ENCODE measurements at regions of chr20 and their contacts with region 1.

Region 1: GRCh38 chr20:49186535-49187329 is 1.4 kb downstream of the STAU1 start:
- DNase-seq: peak; percentile 64 to 71
- H3K4me3 ChIP-seq: peak overlapping the region; percentile 77
- H3K4me3 Mint-ChIP-seq: peak overlapping the region; percentile 81
- H3K27ac Mint-ChIP-seq: peak overlapping the region; percentile 65
- H3K4me1 ChIP-seq: peaks cover 27% of the 10 kb centered on the region
- H3K4me1 Mint-ChIP-seq: peaks cover 36% of the 10 kb centered on the region
- H3K27me3 ChIP-seq: no peaks in the 10 kb centered on the region
- H3K27me3 Mint-ChIP-seq: no peaks in the 10 kb centered on the region
- CTCF ChIP-seq: peak in 1 of 2 experiments; percentile 25

Region 2: GRCh38 chr20:48275685-48276342 is 910.9 kb before region 1 on chr20:
- CTCF ChIA-PET with region 1: no interaction called
- POLR2A ChIA-PET with region 1: no interaction called
- intact Hi-C with region 1: loop called (anchors 10 kb)
- DNase-seq: peak in 1 of 2 experiments; percentile 34
- H3K4me3 ChIP-seq: no peak overlapping the region
- H3K4me3 Mint-ChIP-seq: no peak overlapping the region
- H3K27ac Mint-ChIP-seq: peak overlapping the region; percentile 20
- H3K4me1 ChIP-seq: peaks cover 33% of the 10 kb centered on the region
- H3K4me1 Mint-ChIP-seq: peaks cover 26% of the 10 kb centered on the region
- H3K27me3 ChIP-seq: no peaks in the 10 kb centered on the region
- H3K27me3 Mint-ChIP-seq: no peaks in the 10 kb centered on the region
- CTCF ChIP-seq: no peak

Region 3: DNA sequence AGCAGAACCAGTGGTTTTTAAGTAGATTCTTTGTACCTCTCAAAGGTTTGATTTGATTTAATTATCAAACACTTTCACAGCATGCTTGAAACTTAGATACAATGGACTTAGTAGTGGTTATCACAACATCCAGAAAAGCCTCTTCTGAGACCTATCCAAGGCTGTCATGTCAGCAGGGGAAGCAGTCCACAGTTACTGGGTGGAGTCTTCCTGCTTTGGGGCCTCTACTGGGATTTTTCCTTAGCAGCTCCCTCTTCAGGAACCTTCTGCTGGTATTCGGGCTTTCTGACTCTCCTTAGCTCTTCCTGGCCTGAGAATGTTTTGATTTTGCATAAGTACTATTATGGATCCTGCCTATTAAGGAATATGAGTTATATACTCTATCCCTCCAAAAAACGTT is 229.2 kb before region 1 on chr20:
- CTCF ChIA-PET with region 1: no interaction called
- POLR2A ChIA-PET with region 1: interaction called, 13 read pairs
- intact Hi-C with region 1: no loop called
- DNase-seq: no peak
- H3K4me3 ChIP-seq: no peak overlapping the region
- H3K4me3 Mint-ChIP-seq: no peak overlapping the region
- H3K27ac Mint-ChIP-seq: no peak overlapping the region
- H3K4me1 ChIP-seq: no peaks in the 10 kb centered on the region
- H3K4me1 Mint-ChIP-seq: no peaks in the 10 kb centered on the region
- H3K27me3 ChIP-seq: no peaks in the 10 kb centered on the region
- H3K27me3 Mint-ChIP-seq: no peaks in the 10 kb centered on the region
- CTCF ChIP-seq: no peak

Region 4: GRCh38 chr20:49132995-49133478 is 53.7 kb before region 1 on chr20:
- CTCF ChIA-PET with region 1: interaction called, 3 read pairs
- POLR2A ChIA-PET with region 1: no interaction called
- intact Hi-C with region 1: loop called (anchors 2 kb)
- DNase-seq: peak in 1 of 2 experiments; percentile 80
- H3K4me3 ChIP-seq: no peak overlapping the region
- H3K4me3 Mint-ChIP-seq: no peak overlapping the region
- H3K27ac Mint-ChIP-seq: no peak overlapping the region
- H3K4me1 ChIP-seq: 0 out of 2 replicates have a peak, but pooled peaks cover 5% of the 10 kb centered on the region
- H3K4me1 Mint-ChIP-seq: peaks cover 4% of the 10 kb centered on the region
- H3K27me3 ChIP-seq: no peaks in the 10 kb centered on the region
- H3K27me3 Mint-ChIP-seq: no peaks in the 10 kb centered on the region
- CTCF ChIP-seq: peak; percentile 73 to 77

Region 5: DNA sequence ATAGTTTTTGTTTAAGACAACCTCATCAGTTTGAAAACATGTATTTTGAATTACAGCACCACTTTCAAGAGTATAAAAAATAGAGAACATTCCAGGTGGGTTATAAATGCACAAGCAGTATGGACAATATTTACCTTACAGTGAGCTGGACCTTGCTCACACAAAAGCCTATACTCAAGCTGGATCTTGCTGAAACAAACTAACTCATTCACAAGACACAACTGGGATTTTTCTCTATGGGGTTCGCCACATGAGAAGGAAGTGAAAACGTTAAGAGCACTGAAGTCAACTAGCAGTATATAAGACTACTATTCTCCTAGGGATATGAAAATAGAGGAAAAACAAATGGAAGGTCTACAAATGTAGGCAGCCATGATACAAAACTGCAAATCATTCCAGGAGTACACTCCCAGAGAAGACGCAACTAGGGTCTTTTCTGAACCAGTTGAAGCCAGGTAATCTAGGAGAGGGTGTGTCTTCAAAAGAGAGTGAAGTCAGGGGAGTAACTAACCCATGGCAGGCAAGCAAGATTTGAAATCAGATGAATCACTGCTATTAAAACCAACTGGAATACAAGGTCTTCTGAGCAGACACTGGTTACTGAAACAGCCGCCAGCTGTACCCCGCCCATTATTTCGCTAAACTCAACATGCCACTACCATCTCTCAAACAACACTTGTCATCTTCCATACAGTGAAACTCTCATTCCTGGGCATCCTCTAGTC is 25.1 kb before region 1 on chr20:
- CTCF ChIA-PET with region 1: no interaction called
- POLR2A ChIA-PET with region 1: no interaction called
- intact Hi-C with region 1: loop called (anchors 1 kb)
- DNase-seq: no peak
- H3K4me3 ChIP-seq: no peak overlapping the region
- H3K4me3 Mint-ChIP-seq: no peak overlapping the region
- H3K27ac Mint-ChIP-seq: peak overlapping the region; percentile 72
- H3K4me1 ChIP-seq: peaks cover 11% of the 10 kb centered on the region; the same call in 1 of the 2 replicates
- H3K4me1 Mint-ChIP-seq: peaks cover 15% of the 10 kb centered on the region
- H3K27me3 ChIP-seq: no peaks in the 10 kb centered on the region
- H3K27me3 Mint-ChIP-seq: no peaks in the 10 kb centered on the region
- CTCF ChIP-seq: no peak